ENCODE measurements at regions of chr15 and their contacts with region 1.

Region 1: DNA sequence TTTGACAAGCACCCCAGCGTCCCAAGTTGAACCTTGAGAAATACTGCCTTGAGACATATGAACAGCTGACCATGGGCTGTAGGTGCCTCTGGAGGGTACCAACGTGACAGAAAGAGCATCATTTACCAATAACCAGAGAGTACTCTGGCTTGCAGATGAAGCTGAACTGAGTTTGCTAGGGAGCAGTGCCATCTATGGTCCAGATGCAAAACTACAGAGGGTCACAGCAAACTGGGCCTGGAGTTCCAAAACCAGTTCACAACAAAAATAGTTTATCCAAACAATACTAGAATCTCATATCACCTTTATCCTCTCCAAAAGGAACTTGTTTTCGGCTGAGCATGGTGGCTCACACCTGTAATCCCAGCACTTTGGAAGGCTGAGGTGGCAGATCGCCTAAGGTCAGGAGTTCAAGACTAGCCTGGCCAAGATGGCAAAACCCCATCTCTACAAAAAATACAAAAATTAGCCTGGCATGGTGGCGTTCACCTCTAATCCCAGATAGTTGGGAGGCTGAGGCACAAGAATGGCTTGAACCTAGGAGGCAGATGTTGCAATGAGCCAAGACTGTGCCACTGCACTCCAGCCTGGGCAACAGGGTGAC is 69.3 kb downstream of the CHAC1 start:
- ATAC-seq: peak; percentile 48 to 86 (median 72)
- H3K4me3 ChIP-seq: no peak overlapping the region
- H3K27ac ChIP-seq: no peak overlapping the region
- H3K4me1 ChIP-seq: no peaks in the 10 kb centered on the region

Region 2: GRCh38 chr15:40906091-40906990 is 116.2 kb before region 1 on chr15:
- in situ Hi-C with region 1: loop called in 3 of 9 experiments (anchors 10 to 25 kb)
- ATAC-seq: peak; percentile 75 to 90 (median 80)
- H3K4me3 ChIP-seq: peak overlapping the region in 1 of 5 donors; percentile 11
- H3K27ac ChIP-seq: peak overlapping the region; percentile 34 to 56
- H3K4me1 ChIP-seq: peaks cover 23 to 24% of the 10 kb centered on the region in 2 donors

Measured in motor neuron (in vitro differentiated cells).